ENCODE measurements at regions of chr14 and their contacts with region 1.

Region 1: GRCh38 chr14:64549781-64550620 is at the start of gene PPP1R36:
- DNase-seq: peak in 1 of 2 experiments; percentile 74
- H3K4me3 ChIP-seq: peak within 1 kb of the TSS; percentile 35 to 64 (median 46); a peak in 7 of 8 replicates
- H3K27ac ChIP-seq: no peak within 1 kb of the TSS
- H3K4me1 ChIP-seq: peaks cover 0 to 10% (median 4%) of the 10 kb centered on the region in 4 experiments; a peak in 6 of 7 replicates
- H3K27me3 ChIP-seq: peaks cover 1 to 10% (median 7%) of the 10 kb centered on the region in 4 experiments; a peak in 6 of 7 replicates
- CTCF ChIP-seq: no peak
- EP300 ChIP-seq: no peak
- POLR2A ChIP-seq: peak in 1 of 2 experiments; percentile 39; a peak in 1 of 3 replicates
- RAD21 ChIP-seq: 0 out of 4 replicates have a peak, but pooled peaks of 1 of the 2 experiments have one; percentile 1
- total RNA-seq, gene PPP1R36: 0.61 and 0.93 TPM in 2 replicates

Region 2: DNA sequence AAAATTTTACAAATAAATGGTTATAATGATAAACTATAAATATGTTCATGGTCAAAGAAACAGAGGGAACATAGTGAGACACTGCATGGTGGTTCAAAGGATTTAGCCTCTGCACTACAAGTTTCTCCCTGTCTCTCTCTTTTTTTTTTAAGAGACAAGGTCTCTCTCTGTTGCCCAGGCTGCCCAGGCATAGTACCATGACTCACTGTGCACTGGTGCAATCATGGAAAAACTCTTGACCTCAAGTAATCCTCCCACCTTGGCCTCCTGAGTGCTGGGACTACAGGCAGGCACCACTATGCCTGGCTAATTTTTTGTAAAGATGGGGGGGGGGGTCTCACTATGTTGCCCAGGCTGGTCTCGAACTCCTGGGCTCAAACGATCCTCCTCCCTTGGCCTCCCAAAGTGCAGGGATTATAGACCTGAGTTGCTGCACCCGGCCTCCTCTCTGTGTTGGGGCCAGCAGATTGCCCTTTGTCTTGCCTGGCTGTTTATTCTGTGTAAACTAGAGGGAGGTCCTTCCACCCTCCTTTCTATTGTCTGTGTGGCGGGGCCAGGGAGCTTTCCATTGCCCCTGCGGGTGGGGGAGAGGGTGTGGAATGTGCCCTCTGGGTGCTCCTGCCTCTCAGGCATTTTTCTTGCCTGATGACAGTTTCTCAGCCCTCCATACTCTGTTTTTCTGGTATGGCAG is 139.8 kb before region 1 on chr14:
- CTCF ChIA-PET with region 1: no interaction called
- POLR2A ChIA-PET with region 1: no interaction called
- DNase-seq: no peak
- H3K4me3 ChIP-seq: no peak overlapping the region
- H3K27ac ChIP-seq: no peak overlapping the region
- H3K4me1 ChIP-seq: peaks cover 0 to 3% (median 0%) of the 10 kb centered on the region in 4 experiments; a peak in 2 of 7 replicates
- H3K27me3 ChIP-seq: no peaks in the 10 kb centered on the region
- CTCF ChIP-seq: no peak
- EP300 ChIP-seq: no peak
- POLR2A ChIP-seq: no peak
- RAD21 ChIP-seq: no peak

Region 3: DNA sequence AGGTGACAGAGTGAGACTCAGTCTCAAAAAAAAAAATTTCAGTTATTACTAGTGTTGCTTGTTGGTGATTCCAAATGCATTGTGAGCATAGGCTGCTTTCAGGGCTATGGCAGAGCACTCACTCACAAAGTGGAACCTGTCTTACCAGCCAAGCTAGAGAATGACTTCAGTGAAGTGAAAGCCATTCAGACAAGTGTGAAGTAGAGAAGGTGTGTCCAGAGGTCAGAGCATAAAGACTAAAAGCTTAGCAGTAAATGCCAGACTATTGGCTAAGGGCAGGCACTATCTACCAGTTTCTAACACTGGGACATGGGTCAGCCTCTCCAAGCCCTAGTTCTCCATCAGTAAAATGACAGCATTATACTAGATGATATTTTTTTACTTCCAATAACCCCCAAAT is 12.4 kb after region 1 on chr14:
- CTCF ChIA-PET with region 1: interaction called, 14 read pairs
- POLR2A ChIA-PET with region 1: interaction called, 4 read pairs
- DNase-seq: no peak
- H3K4me3 ChIP-seq: no peak overlapping the region
- H3K27ac ChIP-seq: no peak overlapping the region
- H3K4me1 ChIP-seq: peaks cover 0 to 7% (median 0%) of the 10 kb centered on the region in 4 experiments; a peak in 2 of 7 replicates
- H3K27me3 ChIP-seq: no peaks in the 10 kb centered on the region
- CTCF ChIP-seq: no peak
- EP300 ChIP-seq: no peak
- POLR2A ChIP-seq: no peak
- RAD21 ChIP-seq: no peak

Measured in H1 (cell line).